Dendritic cell treated with granulocyte-macrophage colony-stimulating factor and Interleukin-4, amounts not matched to agents 40 ng/mL and 50 ng/mL, for 4 days (primary cell): ENCODE measurements at regions of chr2 and their contacts with region 1.

Region 1: DNA sequence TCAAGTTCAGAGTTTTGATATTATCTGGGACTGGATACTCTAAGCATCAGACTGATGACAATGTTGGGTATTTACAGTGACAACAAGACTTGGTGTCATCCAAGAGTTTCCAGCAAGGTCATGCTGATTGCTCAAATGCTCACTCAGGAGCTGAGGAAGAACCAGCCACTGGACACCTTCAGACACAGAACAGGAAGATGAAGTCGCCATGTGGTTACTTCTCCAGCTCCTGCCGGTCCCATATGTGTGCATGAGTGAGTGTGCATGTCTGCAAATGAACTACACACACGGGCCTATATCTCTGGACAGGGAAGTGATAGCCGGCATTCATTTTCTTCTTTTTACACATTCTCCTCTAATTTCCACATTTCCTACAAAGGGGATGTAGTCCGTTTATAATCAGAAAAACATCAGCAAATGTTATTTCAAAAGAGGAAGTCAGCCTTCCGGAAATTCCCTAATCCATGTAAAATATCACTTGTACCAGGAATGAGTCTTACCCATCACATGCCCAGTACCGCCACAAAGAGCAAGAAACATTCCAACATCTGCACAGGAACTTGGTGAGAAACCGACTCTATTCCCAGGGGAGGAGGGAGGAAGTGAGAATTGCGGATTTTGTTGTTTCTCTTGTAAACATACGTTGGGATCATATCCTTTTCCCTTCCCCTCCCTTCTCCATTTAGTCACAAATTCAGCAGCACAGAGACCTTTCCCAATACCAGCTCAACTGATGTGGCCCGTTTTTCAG is 10.8 kb downstream of the RFX8 start:
- H3K4me3 Mint-ChIP-seq: no peak overlapping the region
- H3K27ac Mint-ChIP-seq: peak overlapping the region; percentile 32
- H3K4me1 Mint-ChIP-seq: peaks cover 37% of the 10 kb centered on the region
- H3K27me3 Mint-ChIP-seq: peaks cover 72% of the 10 kb centered on the region

Region 2: GRCh38 chr2:101518578-101519492 is 54.8 kb after region 1 on chr2:
- intact Hi-C with region 1: loop called (anchors 10 kb)
- H3K4me3 Mint-ChIP-seq: no peak overlapping the region
- H3K27ac Mint-ChIP-seq: no peak overlapping the region
- H3K4me1 Mint-ChIP-seq: peaks cover 44% of the 10 kb centered on the region
- H3K27me3 Mint-ChIP-seq: peaks cover 36% of the 10 kb centered on the region

Region 3: GRCh38 chr2:101697124-101698013 is 233.3 kb after region 1 on chr2 and contains the start of gene MAP4K4:
- intact Hi-C with region 1: loop called (anchors 10 kb)
- H3K4me3 Mint-ChIP-seq: peak within 1 kb of the TSS; percentile 75
- H3K27ac Mint-ChIP-seq: no peak within 1 kb of the TSS
- H3K4me1 Mint-ChIP-seq: peaks cover 36% of the 10 kb centered on the region
- H3K27me3 Mint-ChIP-seq: peaks cover 16% of the 10 kb centered on the region